T-cell (primary cell): ENCODE measurements at regions of chrX and their contacts with region 1.

Region 1: DNA sequence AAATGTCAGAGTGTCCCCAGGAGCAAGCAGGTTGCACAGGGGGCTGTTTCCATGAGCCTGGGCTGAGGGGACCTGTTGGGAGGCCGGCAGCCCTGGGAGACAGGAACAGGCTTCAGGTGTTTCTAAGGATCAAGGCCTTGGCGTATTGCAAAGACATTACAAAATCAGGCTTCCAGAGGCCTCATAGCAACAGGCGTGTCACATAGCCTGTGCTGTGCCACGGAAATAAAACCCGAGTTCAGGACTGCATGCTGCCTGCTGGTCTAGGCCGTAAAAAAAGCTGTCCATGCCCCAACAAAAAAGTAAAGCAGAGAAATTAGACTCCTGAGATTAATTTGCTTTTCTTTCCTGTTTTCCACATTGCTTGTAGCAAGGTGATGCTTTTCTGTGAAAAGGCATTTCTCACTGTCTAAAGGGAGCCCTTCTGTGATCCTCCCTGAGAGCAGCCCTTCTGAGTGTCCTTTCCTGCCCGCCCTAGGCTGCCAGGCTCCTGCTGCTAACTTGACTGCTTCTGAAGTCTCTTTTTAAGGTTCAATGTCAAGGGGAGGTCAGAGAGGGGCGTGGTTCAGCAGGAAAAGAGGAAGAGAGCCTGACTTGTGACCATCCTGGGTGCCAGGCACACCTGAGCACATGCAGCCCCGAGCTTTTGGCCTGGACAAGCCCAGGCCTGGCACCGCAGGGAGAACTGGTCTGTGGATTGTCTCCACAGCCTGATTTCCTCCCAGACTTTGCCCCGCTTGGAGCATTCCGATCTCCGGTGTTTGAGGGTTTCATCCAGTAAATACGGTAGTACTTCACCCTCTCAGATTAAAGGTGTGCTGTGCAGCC is 21.3 kb downstream of the SHROOM2 start:
- DNase-seq: no peak
- ATAC-seq: no peak
- H3K4me3 ChIP-seq: no peak overlapping the region
- H3K4me3 Mint-ChIP-seq: no peak overlapping the region
- H3K27ac ChIP-seq: no peak overlapping the region
- H3K27ac Mint-ChIP-seq: no peak overlapping the region
- H3K4me1 ChIP-seq: no peaks in the 10 kb centered on the region
- H3K4me1 Mint-ChIP-seq: no peaks in the 10 kb centered on the region
- H3K27me3 ChIP-seq: no peaks in the 10 kb centered on the region
- H3K27me3 Mint-ChIP-seq: peaks cover 0 to 4% of the 10 kb centered on the region in 2 donors

Region 2: GRCh38 chrX:9390121-9390520 is 417.4 kb before region 1 on chrX:
- CTCF ChIA-PET with region 1: no interaction called
- POLR2A ChIA-PET with region 1: no interaction called
- DNase-seq: no peak
- ATAC-seq: no peak
- H3K4me3 ChIP-seq: no peak overlapping the region
- H3K4me3 Mint-ChIP-seq: no peak overlapping the region
- H3K27ac ChIP-seq: no peak overlapping the region
- H3K27ac Mint-ChIP-seq: no peak overlapping the region
- H3K4me1 ChIP-seq: no peaks in the 10 kb centered on the region
- H3K4me1 Mint-ChIP-seq: no peaks in the 10 kb centered on the region
- H3K27me3 ChIP-seq: no peaks in the 10 kb centered on the region
- H3K27me3 Mint-ChIP-seq: peaks cover 0 to 6% of the 10 kb centered on the region in 2 donors

Region 3: GRCh38 chrX:9935436-9935835 is 127.9 kb after region 1 on chrX:
- CTCF ChIA-PET with region 1: no interaction called
- POLR2A ChIA-PET with region 1: no interaction called
- DNase-seq: no peak
- ATAC-seq: no peak
- H3K4me3 ChIP-seq: no peak overlapping the region
- H3K4me3 Mint-ChIP-seq: no peak overlapping the region
- H3K27ac ChIP-seq: no peak overlapping the region
- H3K27ac Mint-ChIP-seq: no peak overlapping the region
- H3K4me1 ChIP-seq: peaks cover 0 to 3% of the 10 kb centered on the region in 2 experiments
- H3K4me1 Mint-ChIP-seq: no peaks in the 10 kb centered on the region
- H3K27me3 ChIP-seq: peaks cover 0 to 24% of the 10 kb centered on the region in 2 experiments
- H3K27me3 Mint-ChIP-seq: peaks cover 6 to 14% of the 10 kb centered on the region in 2 donors

Region 4: GRCh38 chrX:11040996-11041395 is 1233.4 kb after region 1 on chrX:
- CTCF ChIA-PET with region 1: no interaction called
- POLR2A ChIA-PET with region 1: no interaction called
- DNase-seq: no peak
- ATAC-seq: no peak
- H3K4me3 ChIP-seq: no peak overlapping the region
- H3K4me3 Mint-ChIP-seq: no peak overlapping the region
- H3K27ac ChIP-seq: no peak overlapping the region
- H3K27ac Mint-ChIP-seq: no peak overlapping the region
- H3K4me1 ChIP-seq: no peaks in the 10 kb centered on the region
- H3K4me1 Mint-ChIP-seq: no peaks in the 10 kb centered on the region
- H3K27me3 ChIP-seq: no peaks in the 10 kb centered on the region
- H3K27me3 Mint-ChIP-seq: no peaks in the 10 kb centered on the region

Region 5: DNA sequence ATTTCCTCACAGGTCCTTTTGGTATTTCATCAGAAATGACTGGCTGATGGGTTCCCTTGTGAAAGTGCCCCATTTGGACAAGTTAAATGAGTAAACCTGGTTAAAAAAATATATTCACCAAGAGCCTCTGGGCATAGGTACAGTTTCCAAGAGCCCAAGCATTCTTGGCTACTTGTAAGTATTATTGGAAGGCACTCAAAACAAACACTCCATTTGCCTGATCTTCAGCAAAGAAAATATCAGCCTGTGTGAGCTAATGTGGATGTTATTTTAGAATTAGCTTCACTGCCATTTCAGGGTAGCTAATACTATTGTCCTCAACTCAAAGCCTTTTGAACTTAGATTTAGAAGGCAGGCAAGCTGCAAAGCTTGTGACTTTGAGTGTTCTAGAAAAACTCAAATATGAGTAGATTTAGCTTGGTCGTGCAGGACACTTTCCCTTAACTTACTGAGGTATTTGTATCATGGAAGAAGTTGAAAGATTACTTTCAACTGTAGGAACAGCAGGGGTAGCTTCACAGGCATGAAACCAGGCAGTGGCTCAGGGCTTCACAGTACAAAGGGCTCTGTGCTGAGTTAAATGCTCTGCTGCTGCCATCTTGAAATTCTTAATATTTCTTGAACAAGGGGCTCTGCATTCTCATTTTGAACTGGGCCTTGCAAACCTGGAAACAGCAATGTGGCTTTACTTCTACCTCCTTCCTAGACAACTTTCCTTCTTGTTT is 1662.8 kb after region 1 on chrX:
- CTCF ChIA-PET with region 1: no interaction called
- POLR2A ChIA-PET with region 1: interaction called in 1 of 2 experiments, 10 read pairs
- DNase-seq: no peak
- ATAC-seq: no peak
- H3K4me3 ChIP-seq: no peak overlapping the region
- H3K4me3 Mint-ChIP-seq: no peak overlapping the region
- H3K27ac ChIP-seq: no peak overlapping the region
- H3K27ac Mint-ChIP-seq: no peak overlapping the region
- H3K4me1 ChIP-seq: no peaks in the 10 kb centered on the region
- H3K4me1 Mint-ChIP-seq: no peaks in the 10 kb centered on the region
- H3K27me3 ChIP-seq: no peaks in the 10 kb centered on the region
- H3K27me3 Mint-ChIP-seq: peaks cover 0 to 25% of the 10 kb centered on the region in 2 donors